ENCODE measurements at regions of chr7 and their contacts with region 1.

Region 1: GRCh38 chr7:116138202-116138801 is 72.0 kb upstream of the TES start:
- DNase-seq: peak; percentile 16
- H3K4me3 Mint-ChIP-seq: no peak overlapping the region
- H3K27ac Mint-ChIP-seq: no peak overlapping the region
- H3K4me1 Mint-ChIP-seq: peaks cover 20% of the 10 kb centered on the region
- H3K27me3 Mint-ChIP-seq: peaks cover 9% of the 10 kb centered on the region

Region 2: DNA sequence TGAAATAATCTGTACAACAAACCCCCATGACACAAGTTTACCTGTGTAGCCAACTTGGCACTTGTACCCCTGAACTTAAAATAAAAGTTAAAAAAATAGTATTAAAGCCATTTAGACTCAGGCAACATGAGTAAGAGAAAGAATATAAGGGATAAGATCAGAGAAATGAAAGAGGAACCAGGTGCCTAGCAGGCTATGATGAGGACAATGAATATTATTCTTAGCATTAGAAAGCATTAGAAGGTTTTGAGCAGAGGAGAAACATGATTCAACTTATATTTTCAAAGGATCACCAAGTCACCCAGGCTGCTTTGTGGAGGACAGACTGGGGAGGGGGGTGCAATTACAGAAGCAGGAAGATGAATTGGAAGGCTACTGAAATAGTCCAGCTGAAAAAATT is 24.0 kb after region 1 on chr7:
- intact Hi-C with region 1: loop called (anchors 2 kb)
- DNase-seq: no peak
- H3K4me3 Mint-ChIP-seq: no peak overlapping the region
- H3K27ac Mint-ChIP-seq: no peak overlapping the region
- H3K4me1 Mint-ChIP-seq: peaks cover 3% of the 10 kb centered on the region
- H3K27me3 Mint-ChIP-seq: peaks cover 24% of the 10 kb centered on the region

Region 3: GRCh38 chr7:116173051-116174028 is 35.0 kb after region 1 on chr7:
- intact Hi-C with region 1: loop called (anchors 2 kb)
- DNase-seq: no peak
- H3K4me3 Mint-ChIP-seq: no peak overlapping the region
- H3K27ac Mint-ChIP-seq: no peak overlapping the region
- H3K4me1 Mint-ChIP-seq: no peaks in the 10 kb centered on the region
- H3K27me3 Mint-ChIP-seq: peaks cover 13% of the 10 kb centered on the region

Region 4: DNA sequence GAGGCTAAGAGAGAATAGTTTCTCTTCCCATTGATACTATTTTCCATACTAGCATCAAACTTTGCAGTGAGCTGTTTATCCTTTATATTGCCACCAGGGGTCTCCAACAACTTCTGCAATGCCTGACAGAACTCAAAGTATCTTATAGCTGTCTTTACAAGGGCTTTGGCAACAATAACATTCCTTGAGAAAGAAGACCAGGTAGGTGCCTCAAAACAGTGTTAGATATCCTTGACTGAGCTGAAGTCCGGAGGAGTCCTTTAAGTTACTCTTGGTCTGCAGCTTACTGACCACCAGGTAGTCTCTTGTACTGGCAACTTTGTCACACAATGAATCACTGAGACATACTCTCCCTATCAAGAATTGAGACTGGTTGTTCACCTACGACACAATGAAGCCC is 42.0 kb after region 1 on chr7:
- intact Hi-C with region 1: loop called (anchors 1 kb)
- DNase-seq: peak; percentile 13
- H3K4me3 Mint-ChIP-seq: no peak overlapping the region
- H3K27ac Mint-ChIP-seq: no peak overlapping the region
- H3K4me1 Mint-ChIP-seq: no peaks in the 10 kb centered on the region
- H3K27me3 Mint-ChIP-seq: peaks cover 2% of the 10 kb centered on the region

Region 5: DNA sequence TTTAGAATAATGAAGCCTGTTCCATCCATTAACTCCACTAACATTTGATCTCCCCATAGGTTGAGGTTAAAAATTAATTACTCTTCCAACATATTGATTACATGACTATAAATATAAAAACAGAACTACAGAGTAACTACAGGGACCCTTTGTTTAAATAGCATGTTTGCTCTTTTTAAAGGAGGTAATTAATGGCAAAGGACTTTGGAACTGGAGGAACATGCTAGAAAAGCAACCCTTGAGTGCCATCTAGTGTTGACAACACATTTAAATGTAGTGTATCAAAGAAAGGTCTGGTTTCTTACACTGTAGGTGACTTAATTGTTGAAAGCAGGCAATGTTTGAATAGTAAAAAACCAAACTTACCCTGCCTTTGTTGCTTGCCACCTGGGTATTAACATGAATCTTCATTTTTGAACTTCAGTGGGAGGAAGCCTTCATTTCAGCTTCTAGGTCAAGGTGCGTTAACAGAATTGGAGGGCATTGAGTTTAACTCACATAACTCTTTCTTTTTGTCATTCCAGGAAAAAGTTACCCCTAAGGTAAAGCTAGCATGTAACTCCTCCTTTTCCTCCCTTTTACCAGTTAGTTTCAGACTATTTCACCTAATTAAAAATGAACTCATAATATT is 671.4 kb after region 1 on chr7:
- intact Hi-C with region 1: loop called (anchors 10 kb)
- DNase-seq: peak; percentile 3
- H3K4me3 Mint-ChIP-seq: no peak overlapping the region
- H3K27ac Mint-ChIP-seq: no peak overlapping the region
- H3K4me1 Mint-ChIP-seq: no peaks in the 10 kb centered on the region
- H3K27me3 Mint-ChIP-seq: peaks cover 9% of the 10 kb centered on the region